ENCODE measurements at regions of chr11 and their contacts with region 1.

Region 1: GRCh38 chr11:125592305-125593112 is at the start of gene STT3A:
- DNase-seq: peak; percentile 94 to 99 (median 99)
- ATAC-seq: peak; percentile 96
- H3K4me3 ChIP-seq: peak within 1 kb of the TSS; percentile 94
- H3K4me3 Mint-ChIP-seq: peak within 1 kb of the TSS; percentile 88 to 99 (median 96)
- H3K27ac ChIP-seq: peak within 1 kb of the TSS; percentile 95
- H3K27ac Mint-ChIP-seq: peak within 1 kb of the TSS; percentile 94 to 100 (median 99)
- H3K4me1 ChIP-seq: peaks cover 13% of the 10 kb centered on the region in 2 donors
- H3K4me1 Mint-ChIP-seq: peaks cover 30 to 62% (median 53%) of the 10 kb centered on the region in 7 donors
- H3K27me3 ChIP-seq: no peaks in the 10 kb centered on the region
- H3K27me3 Mint-ChIP-seq: no peaks in the 10 kb centered on the region
- total RNA-seq, gene STT3A: 39.6 to 153 (median 84.5) TPM

Region 2: DNA sequence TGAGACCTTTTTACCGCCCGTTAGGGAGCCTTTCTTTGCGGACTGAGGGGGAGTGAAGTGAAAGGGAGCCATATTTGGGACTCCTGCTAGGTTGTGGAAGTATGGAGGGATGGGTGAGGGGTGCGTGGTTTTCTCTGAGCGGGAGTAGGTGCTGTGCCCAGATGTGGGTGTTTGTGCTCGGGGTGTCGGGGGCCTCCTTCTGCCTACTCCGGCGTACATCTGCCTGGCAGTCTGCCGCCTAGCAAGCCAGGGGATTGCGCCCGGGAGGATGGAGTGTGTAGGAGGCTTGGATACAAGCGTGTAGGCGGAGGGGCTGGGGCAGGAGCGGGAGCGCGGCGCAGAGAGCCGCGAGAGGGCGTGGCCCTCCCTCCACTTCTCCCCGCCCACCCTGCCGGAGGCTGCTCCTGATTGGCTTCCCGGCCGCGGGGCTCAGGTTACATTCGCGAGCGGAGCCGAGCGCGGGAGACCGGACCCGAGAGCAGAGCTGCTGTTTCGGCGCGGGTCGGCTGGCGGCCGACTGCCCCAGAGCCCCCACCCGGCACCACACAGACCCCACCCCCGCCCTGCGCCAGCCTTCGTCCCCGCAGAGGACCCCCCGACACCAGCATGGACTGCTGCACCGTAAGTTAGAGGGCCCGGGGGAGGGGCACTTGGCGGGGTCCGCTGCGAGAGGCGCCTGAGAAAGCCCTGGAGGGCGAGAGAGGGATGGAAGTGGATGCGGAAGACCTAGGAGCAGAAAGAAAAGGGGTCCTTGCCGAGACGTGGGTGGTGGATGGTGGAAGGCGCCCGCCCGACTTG is 852.8 kb before region 1 on chr11 and contains the start of gene NRGN:
- CTCF ChIA-PET with region 1: no interaction called
- POLR2A ChIA-PET with region 1: no interaction called
- intact Hi-C with region 1: loop called in 1 of 2 experiments (anchors 10 kb)
- DNase-seq: peak; percentile 64 to 84 (median 77)
- ATAC-seq: peak; percentile 94
- H3K4me3 ChIP-seq: peak within 1 kb of the TSS; percentile 63
- H3K4me3 Mint-ChIP-seq: peak within 1 kb of the TSS; percentile 78 to 90 (median 86)
- H3K27ac ChIP-seq: peak within 1 kb of the TSS; percentile 38
- H3K27ac Mint-ChIP-seq: peak within 1 kb of the TSS in 8 of 9 donors; percentile 25 to 75 (median 56)
- H3K4me1 ChIP-seq: peaks cover 0 to 5% of the 10 kb centered on the region in 2 donors
- H3K4me1 Mint-ChIP-seq: peaks cover 18 to 33% (median 19%) of the 10 kb centered on the region in 7 donors
- H3K27me3 ChIP-seq: no peaks in the 10 kb centered on the region
- H3K27me3 Mint-ChIP-seq: peaks cover 0 to 65% (median 9%) of the 10 kb centered on the region in 5 donors
- total RNA-seq, gene NRGN: 1.2 to 48.7 (median 4.9) TPM

Region 3: GRCh38 chr11:125568970-125569914 is 23.3 kb before region 1 on chr11 and contains the start of gene EI24:
- CTCF ChIA-PET with region 1: interaction called, 5 read pairs
- POLR2A ChIA-PET with region 1: interaction called, 104 read pairs
- intact Hi-C with region 1: loop called (anchors 1 kb)
- DNase-seq: peak; percentile 73 to 89 (median 81)
- ATAC-seq: peak; percentile 99
- H3K4me3 ChIP-seq: peak within 1 kb of the TSS; percentile 90
- H3K4me3 Mint-ChIP-seq: peak within 1 kb of the TSS; percentile 90 to 97 (median 94)
- H3K27ac ChIP-seq: peak within 1 kb of the TSS; percentile 90
- H3K27ac Mint-ChIP-seq: peak within 1 kb of the TSS; percentile 78 to 96 (median 91)
- H3K4me1 ChIP-seq: peaks cover 13 to 16% of the 10 kb centered on the region in 2 donors
- H3K4me1 Mint-ChIP-seq: peaks cover 12 to 38% (median 26%) of the 10 kb centered on the region in 7 donors
- H3K27me3 ChIP-seq: no peaks in the 10 kb centered on the region
- H3K27me3 Mint-ChIP-seq: no peaks in the 10 kb centered on the region
- total RNA-seq, gene EI24: 21.3 to 42.7 (median 35.7) TPM

Region 4: GRCh38 chr11:125750629-125751028 is 158.1 kb after region 1 on chr11:
- CTCF ChIA-PET with region 1: no interaction called
- POLR2A ChIA-PET with region 1: no interaction called
- intact Hi-C with region 1: no loop called
- DNase-seq: no peak
- ATAC-seq: no peak
- H3K4me3 ChIP-seq: no peak overlapping the region
- H3K4me3 Mint-ChIP-seq: no peak overlapping the region
- H3K27ac ChIP-seq: no peak overlapping the region
- H3K27ac Mint-ChIP-seq: no peak overlapping the region
- H3K4me1 ChIP-seq: no peaks in the 10 kb centered on the region
- H3K4me1 Mint-ChIP-seq: no peaks in the 10 kb centered on the region
- H3K27me3 ChIP-seq: no peaks in the 10 kb centered on the region
- H3K27me3 Mint-ChIP-seq: peaks cover 3 to 43% (median 18%) of the 10 kb centered on the region in 5 donors

Region 5: GRCh38 chr11:125902927-125903710 is 310.6 kb after region 1 on chr11 and contains the start of gene PUS3:
- CTCF ChIA-PET with region 1: no interaction called
- POLR2A ChIA-PET with region 1: interaction called, 8 read pairs
- intact Hi-C with region 1: loop called in 1 of 2 experiments (anchors 1 kb)
- DNase-seq: peak; percentile 73 to 88 (median 83)
- ATAC-seq: peak; percentile 96
- H3K4me3 ChIP-seq: peak within 1 kb of the TSS; percentile 91
- H3K4me3 Mint-ChIP-seq: peak within 1 kb of the TSS; percentile 82 to 98 (median 96)
- H3K27ac ChIP-seq: peak within 1 kb of the TSS; percentile 86
- H3K27ac Mint-ChIP-seq: peak within 1 kb of the TSS; percentile 83 to 96 (median 92)
- H3K4me1 ChIP-seq: peaks cover 7 to 13% of the 10 kb centered on the region in 2 donors
- H3K4me1 Mint-ChIP-seq: peaks cover 21 to 54% (median 39%) of the 10 kb centered on the region in 7 donors
- H3K27me3 ChIP-seq: peaks cover 0 to 4% of the 10 kb centered on the region in 2 donors
- H3K27me3 Mint-ChIP-seq: peaks cover 18 to 40% (median 29%) of the 10 kb centered on the region in 5 donors
- total RNA-seq, gene PUS3: 4.6 to 15.3 (median 9.3) TPM

Region 6: DNA sequence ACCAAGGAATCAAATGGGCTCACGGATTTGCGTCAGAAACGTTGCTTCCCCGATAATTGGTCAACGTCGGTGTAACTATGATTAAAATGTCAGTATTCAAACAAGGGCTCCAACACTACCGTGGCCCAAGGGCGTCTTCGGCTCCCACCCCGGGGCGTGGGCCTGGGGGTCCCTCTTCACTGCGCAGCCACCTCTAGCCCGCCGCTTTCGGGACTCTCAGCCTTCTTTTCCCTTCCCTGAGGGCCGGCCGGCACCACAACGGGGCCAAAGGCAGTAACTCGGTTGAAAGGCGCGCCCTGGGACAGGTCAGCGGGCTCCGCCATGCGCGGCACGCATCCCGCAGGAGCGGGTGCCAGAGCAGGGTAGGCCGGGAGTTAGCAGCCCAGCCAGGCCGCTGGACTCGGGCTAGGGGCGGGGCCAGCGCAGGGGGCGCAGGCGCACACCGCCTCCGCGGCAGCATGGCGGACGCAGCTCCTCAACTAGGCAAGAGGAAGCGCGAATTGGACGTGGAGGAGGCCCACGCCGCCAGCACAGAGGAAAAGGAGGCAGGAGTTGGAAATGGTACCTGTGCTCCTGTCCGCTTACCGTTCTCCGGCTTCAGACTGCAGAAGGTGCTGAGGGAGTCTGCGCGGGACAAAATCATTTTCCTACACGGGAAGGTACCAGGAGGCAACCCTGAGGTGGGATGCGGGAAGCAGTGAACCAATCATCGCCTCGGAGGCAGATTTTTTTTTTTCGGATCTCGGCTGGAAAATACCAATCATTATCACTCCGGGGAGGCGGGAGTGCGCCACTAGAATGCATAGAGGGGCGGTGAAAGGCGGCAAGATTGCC is 711.3 kb after region 1 on chr11 and contains the start of gene DCPS:
- CTCF ChIA-PET with region 1: no interaction called
- POLR2A ChIA-PET with region 1: no interaction called
- intact Hi-C with region 1: loop called in 1 of 2 experiments (anchors 5 kb)
- DNase-seq: peak; percentile 78 to 94 (median 86)
- ATAC-seq: peak; percentile 99
- H3K4me3 ChIP-seq: peak within 1 kb of the TSS; percentile 100
- H3K4me3 Mint-ChIP-seq: peak within 1 kb of the TSS; percentile 91 to 99 (median 97)
- H3K27ac ChIP-seq: peak within 1 kb of the TSS; percentile 97
- H3K27ac Mint-ChIP-seq: peak within 1 kb of the TSS; percentile 87 to 99 (median 96)
- H3K4me1 ChIP-seq: peaks cover 18 to 20% of the 10 kb centered on the region in 2 donors
- H3K4me1 Mint-ChIP-seq: peaks cover 19 to 50% (median 45%) of the 10 kb centered on the region in 7 donors
- H3K27me3 ChIP-seq: no peaks in the 10 kb centered on the region
- H3K27me3 Mint-ChIP-seq: no peaks in the 10 kb centered on the region
- total RNA-seq, gene DCPS: 11.0 to 37.2 (median 17.4) TPM

Region 7: DNA sequence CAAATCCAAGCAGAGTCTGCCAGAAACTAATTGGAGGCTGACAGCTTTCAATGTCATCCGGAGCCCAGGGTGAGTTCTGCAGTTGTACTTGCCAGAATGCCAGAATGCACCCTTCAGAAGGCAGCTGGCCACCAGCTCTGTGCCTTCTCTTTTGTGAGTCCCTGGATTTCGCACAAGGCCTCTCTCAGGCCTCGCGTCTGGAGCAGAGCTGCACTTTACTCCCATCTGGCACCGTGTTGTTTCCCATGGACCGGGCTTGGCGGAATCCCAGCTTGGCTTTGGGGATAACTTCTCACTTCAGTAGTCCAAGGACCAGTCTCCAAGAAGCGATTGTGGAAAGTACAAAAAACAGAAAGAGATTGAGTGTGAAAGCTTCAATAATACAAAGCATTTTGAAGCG is 1859.4 kb after region 1 on chr11:
- CTCF ChIA-PET with region 1: no interaction called
- POLR2A ChIA-PET with region 1: no interaction called
- intact Hi-C with region 1: no loop called
- DNase-seq: no peak
- ATAC-seq: no peak
- H3K4me3 ChIP-seq: no peak overlapping the region
- H3K4me3 Mint-ChIP-seq: no peak overlapping the region
- H3K27ac ChIP-seq: no peak overlapping the region
- H3K27ac Mint-ChIP-seq: no peak overlapping the region
- H3K4me1 ChIP-seq: no peaks in the 10 kb centered on the region
- H3K4me1 Mint-ChIP-seq: no peaks in the 10 kb centered on the region
- H3K27me3 ChIP-seq: no peaks in the 10 kb centered on the region
- H3K27me3 Mint-ChIP-seq: peaks cover 0 to 4% (median 1%) of the 10 kb centered on the region in 5 donors

Measured in naive thymus-derived CD4-positive, alpha-beta T cell (primary cell).